Naive thymus-derived CD4-positive, alpha-beta T cell (primary cell): ENCODE measurements at regions of chr14 and their contacts with region 1.

Region 1: DNA sequence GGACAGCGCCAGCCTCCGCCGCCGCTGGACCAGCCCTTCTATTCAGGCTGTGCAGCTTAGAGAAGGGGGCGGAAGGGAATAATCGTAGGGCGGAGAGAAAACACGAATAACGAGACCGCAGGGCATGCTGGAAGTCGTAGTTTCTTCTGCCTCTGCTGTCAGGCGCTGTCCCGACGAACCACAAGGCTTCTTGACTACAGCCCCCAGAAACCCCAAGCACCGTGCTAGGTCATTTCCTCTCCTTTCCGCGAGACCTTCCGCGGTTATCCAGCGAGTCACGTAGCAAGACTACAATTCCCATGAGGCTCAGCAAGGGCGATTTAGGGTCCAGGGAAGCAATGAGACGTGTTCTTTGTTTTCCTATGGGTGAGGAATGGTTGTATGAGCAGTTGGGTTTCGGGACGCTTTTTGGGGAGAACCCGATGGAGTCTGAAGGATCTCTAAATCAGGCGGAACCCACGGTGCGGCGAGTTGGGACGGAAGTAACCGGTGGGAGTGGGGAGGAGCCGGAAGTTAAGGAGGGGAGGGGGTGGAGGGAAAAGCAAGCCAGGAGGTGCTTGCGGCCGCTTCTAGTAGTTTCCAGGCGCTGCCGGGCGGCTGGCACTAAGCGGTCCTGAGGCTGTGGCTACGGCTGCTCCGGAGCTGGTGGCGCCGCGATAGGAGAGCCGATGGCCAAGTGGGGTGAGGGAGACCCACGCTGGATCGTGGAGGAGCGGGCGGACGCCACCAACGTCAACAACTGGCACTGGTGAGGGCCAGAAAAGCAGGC is at the starts of genes AHSA1 and VIPAS39:
- DNase-seq: peak; percentile 67 to 98 (median 96)
- ATAC-seq: peak; percentile 98
- H3K4me3 ChIP-seq: peak within 1 kb of the TSS; percentile 100
- H3K4me3 Mint-ChIP-seq: peak within 1 kb of the TSS; percentile 96 to 100 (median 100)
- H3K27ac ChIP-seq: peak within 1 kb of the TSS; percentile 82
- H3K27ac Mint-ChIP-seq: peak within 1 kb of the TSS; percentile 94 to 100 (median 99)
- H3K4me1 ChIP-seq: peaks cover 20 to 26% of the 10 kb centered on the region in 2 donors
- H3K4me1 Mint-ChIP-seq: peaks cover 22 to 67% (median 53%) of the 10 kb centered on the region in 7 donors
- H3K27me3 ChIP-seq: no peaks in the 10 kb centered on the region
- H3K27me3 Mint-ChIP-seq: no peaks in the 10 kb centered on the region
- total RNA-seq, gene AHSA1: 51.6 to 176 (median 103) TPM
- total RNA-seq, gene VIPAS39: 12.1 to 21.2 (median 20.5) TPM

Region 2: DNA sequence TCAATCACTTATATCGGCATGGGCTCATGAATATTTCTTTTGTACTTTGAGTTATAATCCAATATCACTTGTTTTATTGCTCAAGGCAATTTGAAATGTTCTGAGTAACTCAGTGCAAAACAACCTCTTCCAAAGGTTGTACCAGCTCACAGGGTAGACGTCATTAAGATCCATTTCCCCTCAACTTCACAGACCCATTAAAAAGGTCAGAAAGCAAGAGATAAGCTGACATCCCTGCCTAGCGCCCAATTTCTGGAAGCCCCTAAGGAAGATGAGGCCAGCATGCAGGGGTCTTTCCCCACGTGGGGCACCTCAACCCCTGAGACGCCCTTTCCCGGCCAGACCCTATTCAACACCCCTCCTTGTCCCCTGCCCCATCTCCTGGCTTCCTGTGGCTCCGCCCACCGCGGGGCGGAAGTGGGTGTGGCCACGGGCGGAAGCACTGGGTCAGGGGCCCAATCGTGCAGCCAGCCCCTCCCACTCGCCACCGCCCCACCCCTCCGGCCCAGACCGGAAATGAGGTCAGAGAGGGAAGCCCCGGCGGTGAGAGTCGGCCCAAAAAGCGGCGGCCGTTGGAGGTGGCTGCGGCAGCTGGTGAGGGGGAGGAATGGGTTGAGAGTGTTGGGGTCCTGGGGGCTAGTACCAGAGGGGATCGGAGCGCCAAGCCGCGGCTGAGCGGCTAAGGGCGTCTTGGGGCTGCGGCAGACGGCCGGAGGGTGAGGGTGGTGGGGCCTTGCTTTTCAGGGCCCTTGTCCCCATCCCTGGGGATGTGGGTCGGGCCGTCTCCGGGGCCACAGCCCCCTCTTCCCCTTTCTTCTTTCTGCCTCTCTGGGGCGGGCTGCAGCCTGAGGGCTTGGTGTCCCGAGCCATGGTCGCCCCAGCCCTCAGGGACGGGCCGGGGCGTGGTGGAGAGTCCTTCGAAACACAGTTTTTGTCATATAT is 1306.0 kb before region 1 on chr14 and contains the start of gene GPATCH2L:
- CTCF ChIA-PET with region 1: no interaction called
- POLR2A ChIA-PET with region 1: no interaction called
- intact Hi-C with region 1: loop called in 1 of 2 experiments (anchors 5 kb)
- DNase-seq: peak; percentile 90 to 98 (median 95)
- ATAC-seq: peak; percentile 96
- H3K4me3 ChIP-seq: peak within 1 kb of the TSS; percentile 91
- H3K4me3 Mint-ChIP-seq: peak within 1 kb of the TSS; percentile 89 to 98 (median 95)
- H3K27ac ChIP-seq: peak within 1 kb of the TSS; percentile 95
- H3K27ac Mint-ChIP-seq: peak within 1 kb of the TSS; percentile 86 to 98 (median 96)
- H3K4me1 ChIP-seq: peaks cover 40 to 44% of the 10 kb centered on the region in 2 donors
- H3K4me1 Mint-ChIP-seq: peaks cover 40 to 56% (median 53%) of the 10 kb centered on the region in 7 donors
- H3K27me3 ChIP-seq: no peaks in the 10 kb centered on the region
- H3K27me3 Mint-ChIP-seq: peaks cover 0 to 18% (median 0%) of the 10 kb centered on the region in 5 donors
- total RNA-seq, gene GPATCH2L: 60.4 to 83.1 (median 66.6) TPM

Region 3: DNA sequence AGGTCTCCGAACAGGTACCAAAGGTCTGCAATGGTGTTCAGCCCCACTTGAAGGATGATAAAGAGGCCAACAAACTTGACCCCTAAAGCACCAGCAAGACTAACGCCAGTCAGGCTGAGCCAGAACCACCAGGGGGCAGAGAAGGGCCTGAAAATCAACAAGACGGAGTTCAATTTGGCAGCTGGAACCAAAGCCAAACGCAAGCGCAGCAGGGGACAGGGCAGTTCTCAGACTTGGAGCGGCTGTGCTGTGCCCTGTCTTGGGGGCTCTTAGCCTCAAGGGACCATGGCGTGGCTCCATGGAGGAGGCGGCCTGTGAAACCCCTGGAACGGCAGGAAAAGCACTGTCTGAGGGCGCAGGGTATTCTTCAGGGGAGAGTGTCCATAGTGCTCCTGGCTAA is 156.6 kb before region 1 on chr14:
- CTCF ChIA-PET with region 1: no interaction called
- POLR2A ChIA-PET with region 1: no interaction called
- intact Hi-C with region 1: loop called in 1 of 2 experiments (anchors 5 kb)
- DNase-seq: peak in 8 of 9 donors; percentile 23 to 64 (median 40)
- ATAC-seq: peak; percentile 62
- H3K4me3 ChIP-seq: no peak overlapping the region
- H3K4me3 Mint-ChIP-seq: no peak overlapping the region
- H3K27ac ChIP-seq: no peak overlapping the region
- H3K27ac Mint-ChIP-seq: no peak overlapping the region
- H3K4me1 ChIP-seq: no peaks in the 10 kb centered on the region
- H3K4me1 Mint-ChIP-seq: peaks cover 0 to 15% (median 0%) of the 10 kb centered on the region in 7 donors
- H3K27me3 ChIP-seq: no peaks in the 10 kb centered on the region
- H3K27me3 Mint-ChIP-seq: no peaks in the 10 kb centered on the region

Region 4: GRCh38 chr14:77616454-77617229 is 158.9 kb after region 1 on chr14 and contains the start of gene SPTLC2:
- CTCF ChIA-PET with region 1: no interaction called
- POLR2A ChIA-PET with region 1: interaction called, 3 read pairs
- intact Hi-C with region 1: loop called (anchors 1 kb)
- DNase-seq: peak; percentile 78 to 99 (median 96)
- ATAC-seq: peak; percentile 98
- H3K4me3 ChIP-seq: peak within 1 kb of the TSS; percentile 55
- H3K4me3 Mint-ChIP-seq: peak within 1 kb of the TSS; percentile 85 to 97 (median 92)
- H3K27ac ChIP-seq: peak within 1 kb of the TSS; percentile 69
- H3K27ac Mint-ChIP-seq: peak within 1 kb of the TSS; percentile 45 to 91 (median 86)
- H3K4me1 ChIP-seq: peaks cover 4 to 5% of the 10 kb centered on the region in 2 donors
- H3K4me1 Mint-ChIP-seq: peaks cover 29 to 52% (median 40%) of the 10 kb centered on the region in 7 donors
- H3K27me3 ChIP-seq: no peaks in the 10 kb centered on the region
- H3K27me3 Mint-ChIP-seq: peaks cover 0 to 4% (median 0%) of the 10 kb centered on the region in 5 donors
- total RNA-seq, gene SPTLC2: 19.0 to 58.1 (median 25.7) TPM

Region 5: GRCh38 chr14:77760381-77761246 is 302.9 kb after region 1 on chr14 and contains the start of gene SNW1:
- CTCF ChIA-PET with region 1: no interaction called
- POLR2A ChIA-PET with region 1: interaction called, 3 read pairs
- intact Hi-C with region 1: loop called (anchors 1 kb)
- DNase-seq: peak; percentile 80 to 94 (median 90)
- ATAC-seq: peak; percentile 95
- H3K4me3 ChIP-seq: peak within 1 kb of the TSS; percentile 94
- H3K4me3 Mint-ChIP-seq: peak within 1 kb of the TSS; percentile 91 to 97 (median 95)
- H3K27ac ChIP-seq: peak within 1 kb of the TSS; percentile 97
- H3K27ac Mint-ChIP-seq: peak within 1 kb of the TSS; percentile 92 to 99 (median 98)
- H3K4me1 ChIP-seq: peaks cover 28 to 30% of the 10 kb centered on the region in 2 donors
- H3K4me1 Mint-ChIP-seq: peaks cover 26 to 60% (median 42%) of the 10 kb centered on the region in 7 donors
- H3K27me3 ChIP-seq: no peaks in the 10 kb centered on the region
- H3K27me3 Mint-ChIP-seq: no peaks in the 10 kb centered on the region
- total RNA-seq, gene SNW1: 84.4 to 108 (median 97.7) TPM